GM23248 (cell line): ENCODE measurements at regions of chr20 and their contacts with region 1.

Region 1: DNA sequence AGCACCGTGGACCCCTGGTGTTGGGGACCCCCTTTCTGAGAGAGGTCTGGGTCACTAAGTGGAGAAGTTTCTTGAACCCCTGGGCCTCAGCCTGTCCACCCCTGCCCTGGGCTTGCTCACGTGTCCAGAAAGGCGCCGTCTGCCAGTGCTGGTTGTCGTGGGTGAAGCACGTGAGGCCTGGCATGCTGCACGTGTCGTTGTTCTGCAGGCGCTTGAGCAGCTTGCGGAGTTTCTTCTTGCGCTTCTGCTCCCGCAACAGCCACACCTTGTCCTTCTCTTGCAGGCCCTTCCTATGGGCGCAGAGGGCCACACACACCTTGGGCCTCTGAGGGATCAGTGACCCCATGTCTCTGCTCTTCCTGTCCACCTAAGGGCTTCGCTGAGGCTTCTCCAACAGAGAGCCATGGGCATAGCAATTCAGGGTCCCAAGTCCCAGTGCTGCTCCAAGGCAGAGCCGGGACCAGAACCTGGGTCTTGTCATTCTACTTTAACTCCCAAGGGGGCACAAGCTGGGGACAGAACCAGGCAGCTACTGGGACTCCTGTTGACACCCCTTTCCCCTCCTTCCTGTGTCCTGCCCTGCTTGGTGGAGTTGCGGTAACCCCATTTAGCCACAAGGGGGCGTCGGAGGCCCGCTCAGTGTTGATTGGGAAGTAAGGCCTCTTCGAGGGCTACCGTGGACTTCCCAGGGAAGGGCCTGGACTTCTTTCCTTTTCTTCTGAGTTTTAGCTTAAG is 121.8 kb downstream of the SULF2 start:
- DNase-seq: peak; percentile 70
- H3K4me3 ChIP-seq: no peak overlapping the region
- H3K27ac ChIP-seq: no peak overlapping the region
- H3K4me1 ChIP-seq: no peaks in the 10 kb centered on the region
- H3K27me3 ChIP-seq: no peaks in the 10 kb centered on the region

Region 2: GRCh38 chr20:47529840-47530239 is 133.7 kb before region 1 on chr20:
- in situ Hi-C with region 1: no loop called
- DNase-seq: peak; percentile 52
- H3K4me3 ChIP-seq: no peak overlapping the region
- H3K27ac ChIP-seq: no peak overlapping the region
- H3K4me1 ChIP-seq: peaks cover 7% of the 10 kb centered on the region
- H3K27me3 ChIP-seq: no peaks in the 10 kb centered on the region

Region 3: DNA sequence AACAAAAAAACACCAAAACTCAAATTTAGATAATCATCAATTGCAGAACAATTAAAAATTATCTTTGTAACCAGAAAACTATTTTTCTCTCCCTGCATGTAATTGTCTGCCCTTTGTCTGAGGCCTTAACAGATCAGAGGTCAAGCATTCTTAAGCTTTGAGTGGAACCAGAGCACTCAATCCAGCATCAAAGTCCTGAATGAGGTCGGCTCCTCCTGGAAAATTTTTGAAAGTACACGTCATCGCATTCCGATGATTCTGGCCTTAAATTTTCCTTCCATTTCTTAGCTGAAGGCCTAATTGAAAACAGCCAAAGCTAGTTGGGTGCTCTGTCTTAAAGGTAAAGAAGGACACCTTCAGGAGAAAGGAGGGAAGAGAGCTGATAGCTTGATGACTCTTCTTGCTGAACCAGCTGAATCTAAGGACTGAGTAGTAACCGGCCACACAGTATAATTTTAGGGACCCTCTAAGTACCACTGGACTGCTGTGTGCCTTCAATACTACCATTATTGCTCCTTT is 632.0 kb after region 1 on chr20:
- in situ Hi-C with region 1: loop called (anchors 10 kb)
- DNase-seq: peak; percentile 91
- H3K4me3 ChIP-seq: peak overlapping the region; percentile 34
- H3K27ac ChIP-seq: peak overlapping the region; percentile 52
- H3K4me1 ChIP-seq: peaks cover 35% of the 10 kb centered on the region
- H3K27me3 ChIP-seq: peaks cover 15% of the 10 kb centered on the region

Region 4: DNA sequence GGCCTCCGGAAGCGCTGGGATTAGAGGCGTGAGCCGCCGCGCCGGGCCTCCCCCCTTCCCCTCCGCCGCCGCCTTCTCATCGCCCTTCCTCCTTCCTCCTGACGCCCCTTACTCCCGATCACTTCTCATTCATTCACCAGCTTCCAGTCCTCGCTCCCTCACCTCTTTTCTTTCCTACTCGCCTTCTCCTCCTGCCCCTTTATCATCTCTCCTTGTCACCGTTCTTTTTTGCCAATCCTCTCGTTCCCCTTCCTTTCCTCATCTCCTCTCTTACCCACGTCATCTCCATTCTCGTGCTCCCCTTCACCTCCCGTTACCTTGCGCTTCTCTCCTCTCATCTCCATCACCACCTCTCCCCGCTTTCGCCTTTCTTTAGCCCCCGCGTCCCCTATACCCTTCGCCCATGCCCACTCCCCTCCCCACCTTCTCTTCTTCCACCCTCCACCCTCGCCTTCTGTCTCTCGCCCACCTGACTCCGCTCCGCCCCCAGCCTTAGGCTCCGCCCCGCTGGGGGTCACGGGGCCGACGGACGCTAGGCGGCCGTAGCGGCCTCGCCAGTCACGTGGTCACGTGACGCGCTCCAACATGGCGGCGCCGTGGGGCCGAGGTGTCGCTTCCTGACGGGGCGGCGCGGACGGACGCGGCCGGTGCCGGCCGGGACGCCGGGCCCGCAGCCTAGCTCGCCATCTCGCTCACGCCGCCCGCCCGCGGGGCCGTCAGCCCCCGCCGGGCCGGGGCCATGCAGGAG is 1257.8 kb after region 1 on chr20 and contains the start of gene ARFGEF2:
- in situ Hi-C with region 1: loop called (anchors 25 kb)
- DNase-seq: peak; percentile 98
- H3K4me3 ChIP-seq: peak within 1 kb of the TSS; percentile 92
- H3K27ac ChIP-seq: peak within 1 kb of the TSS; percentile 93
- H3K4me1 ChIP-seq: peaks cover 21% of the 10 kb centered on the region
- H3K27me3 ChIP-seq: no peaks in the 10 kb centered on the region
- total RNA-seq, gene ARFGEF2: 30.6 and 31.1 TPM in 2 replicates